Activated CD4-positive, alpha-beta memory T cell treated with anti-CD3 and anti-CD28 coated beads for 36 hours (primary cell): ENCODE measurements at regions of chr5 and their contacts with region 1.

Region 1: GRCh38 chr5:132495667-132496190 is 5.2 kb upstream of the IRF1 start:
- DNase-seq: peak; percentile 90
- H3K4me3 Mint-ChIP-seq: peak overlapping the region; percentile 89
- H3K27ac Mint-ChIP-seq: peak overlapping the region; percentile 98
- H3K4me1 Mint-ChIP-seq: peaks cover 57% of the 10 kb centered on the region
- H3K27me3 Mint-ChIP-seq: no peaks in the 10 kb centered on the region

Region 2: DNA sequence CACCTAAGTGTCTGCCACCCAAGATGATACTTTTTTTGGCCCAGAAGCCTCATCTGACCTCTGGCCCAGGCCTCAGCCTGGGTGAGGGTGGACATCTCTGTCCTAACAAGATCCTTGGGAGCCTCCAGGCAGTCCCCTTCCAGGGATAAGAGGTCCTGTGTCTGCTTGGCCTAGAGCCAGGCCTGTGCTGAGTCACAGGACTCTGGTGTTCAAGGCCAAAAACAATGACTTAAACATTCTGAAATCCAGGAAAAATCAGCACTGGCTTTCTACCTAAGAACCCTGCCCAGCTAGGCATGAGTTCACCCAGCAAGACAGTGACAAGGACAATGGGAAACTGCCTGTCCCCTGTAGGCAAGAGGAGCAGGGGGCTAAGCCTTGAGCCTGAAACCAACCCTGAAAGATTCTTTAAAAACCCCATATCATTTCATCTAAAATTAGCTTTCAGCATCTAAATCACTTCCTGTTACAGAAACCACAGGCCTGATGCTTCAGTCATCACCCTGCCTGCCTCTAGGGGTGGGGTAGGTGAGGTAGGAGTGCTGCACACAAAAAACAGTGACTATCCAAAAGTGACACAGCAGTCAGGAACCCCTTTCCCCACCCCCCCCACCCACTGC is 392.3 kb before region 1 on chr5:
- CTCF ChIA-PET with region 1: no interaction called
- POLR2A ChIA-PET with region 1: interaction called, 5 read pairs
- intact Hi-C with region 1: loop called (anchors 2 kb)
- DNase-seq: peak; percentile 84
- H3K4me3 Mint-ChIP-seq: peak overlapping the region; percentile 38
- H3K27ac Mint-ChIP-seq: peak overlapping the region; percentile 86
- H3K4me1 Mint-ChIP-seq: peaks cover 74% of the 10 kb centered on the region
- H3K27me3 Mint-ChIP-seq: no peaks in the 10 kb centered on the region

Region 3: GRCh38 chr5:132386644-132387286 is 109.0 kb before region 1 on chr5:
- CTCF ChIA-PET with region 1: interaction called, 461 read pairs
- POLR2A ChIA-PET with region 1: interaction called, 11 read pairs
- intact Hi-C with region 1: no loop called
- DNase-seq: peak; percentile 87
- H3K4me3 Mint-ChIP-seq: no peak overlapping the region
- H3K27ac Mint-ChIP-seq: peak overlapping the region; percentile 14
- H3K4me1 Mint-ChIP-seq: peaks cover 42% of the 10 kb centered on the region
- H3K27me3 Mint-ChIP-seq: no peaks in the 10 kb centered on the region

Region 4: DNA sequence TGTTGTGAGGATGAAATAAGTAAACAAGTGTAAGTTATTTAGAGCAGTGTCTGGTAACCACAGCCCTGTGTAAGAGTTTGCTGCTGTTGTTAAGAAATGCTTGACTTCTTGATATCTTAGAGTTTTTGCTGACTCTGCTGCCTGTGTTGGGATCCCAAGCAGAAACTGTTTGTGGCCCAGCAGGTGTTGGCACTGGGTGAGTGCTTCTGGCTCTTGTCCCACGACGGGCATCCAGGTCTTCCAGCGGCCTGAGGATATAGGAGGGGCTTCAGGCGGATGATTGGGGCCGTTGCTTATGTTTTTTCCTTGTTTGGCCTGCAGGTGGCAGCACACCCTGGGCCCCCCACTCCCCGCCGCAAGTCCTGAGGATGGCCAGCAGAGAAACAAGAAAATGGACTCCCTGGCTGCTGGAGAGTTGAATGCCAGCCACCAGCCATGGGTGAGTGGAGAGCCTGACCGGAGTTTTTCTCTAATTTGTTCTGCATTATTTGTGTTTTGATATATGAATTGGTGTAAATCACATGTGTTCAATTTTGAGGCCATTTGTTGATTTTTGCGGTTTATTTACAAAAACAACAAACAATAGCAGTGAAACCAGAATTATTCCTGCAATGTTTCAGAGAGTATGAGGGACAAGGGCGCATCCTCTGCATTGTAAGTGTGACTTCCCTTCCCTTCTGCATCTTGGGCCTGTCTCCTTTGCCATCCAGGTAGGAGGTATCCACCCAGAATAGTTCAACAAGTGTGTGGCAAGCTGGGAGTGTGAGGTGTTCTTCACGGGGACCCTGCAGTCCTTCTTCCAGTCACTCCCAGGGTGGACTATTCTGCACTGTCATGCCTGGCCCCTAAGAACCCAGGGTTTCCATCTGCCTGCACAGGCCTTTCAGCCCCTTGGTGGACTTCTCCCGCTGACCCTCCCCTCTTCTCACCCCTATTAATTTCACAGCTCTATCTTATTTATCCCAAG is 75.9 kb before region 1 on chr5:
- CTCF ChIA-PET with region 1: interaction called, 32 read pairs
- POLR2A ChIA-PET with region 1: interaction called, 361 read pairs
- intact Hi-C with region 1: loop called (anchors 1 kb)
- DNase-seq: peak; percentile 78
- H3K4me3 Mint-ChIP-seq: peak overlapping the region; percentile 15
- H3K27ac Mint-ChIP-seq: peak overlapping the region; percentile 83
- H3K4me1 Mint-ChIP-seq: peaks cover 89% of the 10 kb centered on the region
- H3K27me3 Mint-ChIP-seq: no peaks in the 10 kb centered on the region

Region 5: GRCh38 chr5:132466433-132467286 is 29.1 kb before region 1 on chr5:
- CTCF ChIA-PET with region 1: interaction called, 31 read pairs
- POLR2A ChIA-PET with region 1: interaction called, 252 read pairs
- intact Hi-C with region 1: loop called (anchors 1 kb)
- DNase-seq: peak; percentile 85
- H3K4me3 Mint-ChIP-seq: peak overlapping the region; percentile 68
- H3K27ac Mint-ChIP-seq: peak overlapping the region; percentile 75
- H3K4me1 Mint-ChIP-seq: peaks cover 86% of the 10 kb centered on the region
- H3K27me3 Mint-ChIP-seq: no peaks in the 10 kb centered on the region

Region 6: GRCh38 chr5:132479111-132479951 is 16.4 kb before region 1 on chr5:
- CTCF ChIA-PET with region 1: interaction called, 27 read pairs
- POLR2A ChIA-PET with region 1: interaction called, 252 read pairs
- intact Hi-C with region 1: no loop called
- DNase-seq: no peak
- H3K4me3 Mint-ChIP-seq: peak overlapping the region; percentile 28
- H3K27ac Mint-ChIP-seq: peak overlapping the region; percentile 87
- H3K4me1 Mint-ChIP-seq: peaks cover 68% of the 10 kb centered on the region
- H3K27me3 Mint-ChIP-seq: no peaks in the 10 kb centered on the region